Heart left ventricle (tissue), 16 donors: ENCODE measurements at regions of chr1 and their contacts with region 1.

Region 1: DNA sequence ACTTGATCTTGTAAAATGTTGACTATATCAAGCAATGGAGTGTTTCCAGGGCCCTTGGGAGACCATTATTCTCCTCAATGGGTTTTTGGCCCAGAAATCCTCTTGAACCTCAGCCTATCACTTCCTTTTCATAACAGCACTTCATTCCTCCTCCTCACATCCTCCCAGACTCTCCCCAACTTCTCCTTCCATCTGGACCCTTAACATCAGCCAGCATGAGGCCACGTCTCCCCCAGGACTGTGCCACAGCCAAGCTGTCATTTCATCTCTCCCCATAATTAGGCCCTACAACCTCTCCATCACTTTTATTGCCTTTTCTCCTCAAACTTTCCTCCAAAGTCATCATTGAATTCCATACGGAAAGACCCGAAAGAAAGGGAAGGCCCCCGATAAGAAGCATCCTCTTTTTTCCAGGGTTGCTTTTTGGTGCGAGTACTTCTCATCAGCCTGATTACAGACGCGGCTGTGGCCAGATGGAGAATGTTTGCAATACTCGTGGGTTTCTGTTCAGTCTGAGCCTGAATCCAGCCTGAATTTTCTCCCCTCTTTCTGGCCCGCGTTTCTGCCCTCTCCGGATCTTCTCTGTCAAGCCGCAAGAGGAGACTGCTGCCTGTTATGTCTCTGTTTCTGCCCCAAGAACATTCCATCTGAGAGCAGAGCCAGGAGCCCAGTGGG is 52.7 kb upstream of the SLC25A33 start:
- DNase-seq: no peak
- ATAC-seq: no peak
- H3K4me3 ChIP-seq: no peak overlapping the region
- H3K27ac ChIP-seq: peak overlapping the region in 2 of 12 donors; percentile 4 to 50
- H3K4me1 ChIP-seq: peaks cover 0 to 3% (median 0%) of the 10 kb centered on the region in 12 donors
- H3K27me3 ChIP-seq: no peaks in the 10 kb centered on the region
- CTCF ChIP-seq: no peak
- POLR2A ChIP-seq: no peak

Region 2: DNA sequence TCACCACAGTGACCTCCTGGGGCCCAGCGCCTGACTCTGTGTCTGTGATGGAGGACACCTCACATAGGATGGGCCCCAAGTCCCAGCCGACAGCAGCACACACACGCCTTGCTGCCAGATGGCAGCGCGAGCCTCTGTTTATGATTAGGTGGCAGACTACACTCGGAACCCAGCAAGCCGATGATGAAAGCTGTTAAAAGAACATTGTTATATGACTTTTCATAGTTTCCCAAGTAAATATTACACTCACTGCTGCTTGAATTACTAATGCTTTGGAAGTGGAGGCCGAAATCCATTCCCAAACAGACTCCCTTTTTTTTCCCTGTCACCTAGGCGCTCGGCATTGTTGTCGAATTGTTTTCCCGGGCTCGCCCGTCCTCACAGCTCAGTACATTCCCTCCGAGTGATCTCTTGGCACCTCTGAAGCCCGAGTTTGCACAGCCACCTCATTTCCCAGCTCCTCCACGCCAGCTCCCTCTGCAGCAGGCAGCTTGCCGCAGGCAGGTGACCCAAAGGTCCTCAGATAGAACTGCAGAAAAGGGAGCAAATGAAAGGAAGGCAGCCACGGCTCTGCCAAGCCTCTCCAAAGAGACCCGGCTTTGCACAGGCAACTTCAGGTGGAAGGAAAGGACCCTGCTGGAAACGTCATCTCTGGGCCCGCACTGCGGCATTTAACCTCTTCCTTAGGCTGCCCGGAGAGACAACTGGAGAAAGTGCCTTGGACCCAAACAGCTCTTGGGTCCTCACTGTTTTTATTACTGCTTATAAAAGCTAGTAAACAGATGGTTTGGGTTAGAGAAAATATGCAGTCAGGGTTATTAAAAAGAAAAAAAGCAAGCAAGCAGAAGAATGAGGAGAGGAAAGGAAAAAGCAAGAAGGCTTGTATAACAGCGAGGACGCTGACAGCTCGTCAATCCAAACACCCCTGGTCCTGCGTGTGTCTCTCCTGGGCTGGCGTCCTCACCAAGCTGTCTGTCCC is 19.5 kb before region 1 on chr1:
- intact Hi-C with region 1: loop called in 1 of 10 experiments (anchors 2 kb)
- DNase-seq: peak in 2 of 5 donors; percentile 51 to 71
- ATAC-seq: peak; percentile 70 to 96 (median 90)
- H3K4me3 ChIP-seq: no peak overlapping the region
- H3K27ac ChIP-seq: peak overlapping the region in 9 of 12 donors; percentile 13 to 62 (median 43)
- H3K4me1 ChIP-seq: peaks cover 0 to 3% (median 0%) of the 10 kb centered on the region in 12 donors
- H3K27me3 ChIP-seq: no peaks in the 10 kb centered on the region
- CTCF ChIP-seq: no peak
- POLR2A ChIP-seq: no peak

Region 3: DNA sequence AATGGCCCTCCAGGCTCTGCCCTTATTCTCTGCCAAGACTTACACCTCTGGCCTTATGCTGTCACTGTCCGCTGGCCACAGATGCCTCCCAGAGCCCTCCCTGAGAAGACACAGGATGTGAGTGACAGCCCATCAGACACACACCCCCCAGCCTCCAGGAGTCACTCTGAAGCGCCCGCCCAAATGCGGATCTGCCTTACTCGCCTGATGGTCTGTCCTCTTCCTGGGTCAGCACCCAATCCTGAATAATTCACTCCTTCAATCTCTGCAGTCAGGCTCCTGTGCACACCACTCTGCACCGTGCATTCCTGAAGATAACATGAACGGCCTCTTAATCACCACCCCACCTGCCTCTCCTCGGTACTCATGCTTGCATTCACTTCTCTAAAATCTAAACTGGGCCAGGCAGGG is 322.5 kb after region 1 on chr1:
- intact Hi-C with region 1: no loop called
- DNase-seq: no peak
- ATAC-seq: peak in 2 of 4 donors; percentile 24 to 51
- H3K4me3 ChIP-seq: no peak overlapping the region
- H3K27ac ChIP-seq: no peak overlapping the region
- H3K4me1 ChIP-seq: peaks cover 0 to 43% (median 27%) of the 10 kb centered on the region in 12 donors
- H3K27me3 ChIP-seq: no peaks in the 10 kb centered on the region
- CTCF ChIP-seq: no peak
- POLR2A ChIP-seq: no peak